ENCODE measurements at regions of chr22 and their contacts with region 1.

Region 1: DNA sequence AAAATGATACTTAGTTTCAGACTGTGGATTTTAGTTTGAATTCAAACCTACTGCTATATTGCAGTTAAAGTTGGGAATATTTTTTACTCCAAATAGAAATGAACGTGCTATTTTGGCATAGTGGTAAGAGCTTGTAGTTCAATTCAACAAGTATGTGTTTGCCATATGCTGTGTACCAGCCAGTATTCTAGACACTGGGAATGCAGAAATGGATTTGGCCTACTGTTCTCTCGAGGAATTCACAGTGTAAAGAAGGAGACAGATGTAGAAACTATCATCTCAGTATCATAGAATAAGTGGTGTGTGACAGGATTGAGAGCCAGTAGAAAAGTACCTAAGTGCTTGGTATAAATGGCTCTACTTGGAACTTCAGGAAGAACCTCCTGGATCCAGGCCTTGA is 80.4 kb downstream of the ATXN10 start:
- DNase-seq: no peak

Region 2: DNA sequence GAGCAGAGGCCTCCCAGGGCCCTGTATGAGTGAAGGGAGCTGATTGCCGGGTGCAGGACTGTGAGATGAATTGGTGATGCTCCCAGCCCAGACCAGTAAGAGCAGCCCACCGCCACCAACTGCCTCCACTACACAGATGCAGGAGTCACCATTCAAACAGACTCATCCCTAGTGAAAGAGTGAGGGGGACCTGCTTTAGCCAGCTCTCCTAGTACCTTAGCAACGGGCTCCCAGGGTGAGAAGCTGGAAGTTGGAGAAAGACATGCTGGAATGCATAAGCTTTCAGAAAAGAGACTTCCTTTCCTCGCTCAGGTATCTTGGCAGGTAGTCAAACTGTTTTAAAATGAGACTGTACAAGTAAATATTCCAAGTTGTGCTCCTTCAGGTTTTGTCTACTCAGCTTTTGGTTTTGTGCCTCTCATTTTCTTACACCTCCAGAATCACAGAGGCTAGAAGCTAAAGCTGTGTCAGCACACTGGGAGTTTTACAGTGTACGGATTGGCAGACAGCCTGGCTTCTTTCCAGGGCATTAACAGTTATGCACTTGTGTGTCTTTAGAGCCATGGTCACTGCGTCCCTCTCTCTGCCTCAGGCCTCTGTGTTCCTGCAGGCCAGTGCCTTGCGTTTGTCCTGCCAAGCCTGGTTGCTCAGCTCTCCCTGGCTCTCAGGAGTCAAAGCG is 65.8 kb after region 1 on chr22:
- intact Hi-C with region 1: loop called in 1 of 2 experiments (anchors 2 kb)
- DNase-seq: no peak